ENCODE measurements at regions of chr12 and their contacts with region 1.

Region 1: GRCh38 chr12:47736877-47737676 is 11.8 kb upstream of the ENDOU start:
- DNase-seq: no peak
- H3K4me3 ChIP-seq: no peak overlapping the region
- H3K27ac ChIP-seq: no peak overlapping the region
- H3K4me1 ChIP-seq: peaks cover 4 to 25% (median 21%) of the 10 kb centered on the region in 4 experiments
- H3K27me3 ChIP-seq: no peaks in the 10 kb centered on the region

Region 2: DNA sequence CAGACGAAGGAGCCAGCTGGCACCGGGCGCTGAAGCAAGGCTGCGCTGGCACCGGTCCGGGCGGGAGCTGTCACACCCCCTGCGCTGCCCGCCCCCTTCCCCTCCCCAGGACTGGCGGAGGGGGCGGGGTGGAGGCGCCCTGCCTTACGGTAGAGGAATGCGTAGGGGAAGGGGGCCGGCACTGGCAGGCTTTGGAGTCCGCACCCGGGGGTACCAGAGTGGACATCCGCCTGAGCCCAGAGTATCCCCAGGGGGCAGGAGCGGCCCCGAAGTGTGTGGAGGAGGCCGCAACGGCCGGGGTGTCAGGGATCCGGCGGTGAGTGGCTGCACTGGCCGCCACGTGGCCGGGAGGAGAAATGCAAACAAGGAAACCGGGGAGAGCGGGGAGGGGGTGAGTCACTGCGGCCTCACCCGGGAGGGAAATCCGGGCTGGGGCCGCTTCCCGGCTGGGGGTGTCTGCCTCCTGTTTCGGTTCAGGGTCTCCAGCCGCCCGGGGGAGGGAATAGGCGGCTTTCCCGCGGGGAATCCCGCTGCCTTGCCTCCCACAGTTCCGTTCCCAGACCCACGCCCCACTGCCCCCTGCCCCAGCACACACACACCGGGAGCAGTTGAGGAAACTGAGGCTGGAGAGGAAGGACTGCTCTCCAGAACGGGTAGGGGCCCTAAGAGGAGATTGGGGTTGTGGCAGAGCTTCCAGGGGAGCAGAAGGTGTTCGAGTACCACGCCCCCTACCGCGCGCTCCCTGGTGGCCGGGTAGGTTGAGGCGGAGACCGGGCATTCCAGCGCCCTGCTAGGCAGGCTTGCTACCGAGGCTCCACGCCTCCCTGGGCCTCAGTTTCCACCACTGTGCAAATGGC is 22.0 kb after region 1 on chr12 and contains the start of gene RAPGEF3:
- CTCF ChIA-PET with region 1: interaction called, 354 read pairs
- POLR2A ChIA-PET with region 1: interaction called, 3 read pairs
- DNase-seq: peak; percentile 79 to 84 (median 82)
- H3K4me3 ChIP-seq: peak within 1 kb of the TSS; percentile 25 to 90 (median 69)
- H3K27ac ChIP-seq: peak within 1 kb of the TSS; percentile 50 to 84
- H3K4me1 ChIP-seq: peaks cover 0 to 53% (median 36%) of the 10 kb centered on the region in 4 experiments
- H3K27me3 ChIP-seq: no peaks in the 10 kb centered on the region

Region 3: DNA sequence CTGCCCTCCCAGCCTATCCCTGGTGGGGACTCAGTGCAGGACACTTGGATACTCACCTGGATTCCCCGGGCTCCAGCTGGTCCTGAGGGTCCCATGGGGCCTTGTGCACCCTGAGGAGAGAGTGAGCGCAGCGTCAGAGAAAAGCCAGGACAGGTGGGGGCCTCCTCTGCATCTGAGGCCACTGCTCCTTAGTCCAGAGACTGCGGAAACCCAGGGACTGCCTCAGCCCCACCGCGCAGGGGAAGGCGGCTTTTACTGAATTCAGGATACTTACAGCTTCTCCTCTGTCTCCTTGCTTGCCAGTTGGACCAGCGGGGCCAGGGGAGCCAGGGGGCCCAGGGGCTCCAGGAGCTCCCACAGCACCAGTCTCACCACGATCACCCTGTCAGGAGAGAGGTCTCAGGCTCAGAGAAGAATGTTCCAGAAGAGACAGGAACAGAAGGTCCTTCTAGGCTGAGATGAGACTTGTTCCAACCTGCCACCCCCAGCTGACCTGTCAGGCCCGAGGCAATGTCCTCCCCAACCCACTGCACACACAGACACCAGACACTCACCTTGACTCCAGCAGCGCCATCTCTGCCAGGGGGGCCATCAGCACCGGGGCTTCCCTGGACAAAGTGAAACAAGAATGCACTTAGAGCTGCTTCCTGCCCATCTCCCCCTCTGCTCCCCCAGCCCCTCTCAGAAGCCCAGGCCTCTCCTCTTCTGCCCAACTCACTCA is 240.1 kb after region 1 on chr12:
- CTCF ChIA-PET with region 1: no interaction called
- POLR2A ChIA-PET with region 1: no interaction called
- DNase-seq: no peak
- H3K4me3 ChIP-seq: no peak overlapping the region
- H3K27ac ChIP-seq: no peak overlapping the region
- H3K4me1 ChIP-seq: no peaks in the 10 kb centered on the region
- H3K27me3 ChIP-seq: no peaks in the 10 kb centered on the region

Measured in common myeloid progenitor, CD34-positive (primary cell).